Endothelial cell of umbilical vein (primary cell): ENCODE measurements at regions of chr3 and their contacts with region 1.

Region 1: DNA sequence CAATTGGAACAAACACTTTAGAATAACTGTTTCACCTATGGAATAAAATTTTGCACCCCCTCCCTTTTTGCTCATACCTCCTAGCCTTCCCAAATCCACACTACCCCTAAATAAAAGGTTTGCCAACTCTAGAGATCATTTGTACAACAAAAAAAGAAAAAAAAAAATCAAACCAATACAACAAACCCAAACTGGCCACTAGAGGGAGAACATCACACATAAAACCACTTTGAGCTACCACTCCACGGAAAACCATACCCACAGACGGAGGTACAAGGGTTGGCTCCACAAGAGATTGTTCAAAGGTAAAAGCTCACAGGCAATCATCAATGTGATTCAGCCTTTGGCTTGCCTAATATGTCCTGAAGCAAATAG is 47.6 kb downstream of the SETMAR start:
- DNase-seq: no peak
- H3K4me3 ChIP-seq: peak overlapping the region; percentile 26 to 75 (median 49)
- H3K27ac ChIP-seq: peak overlapping the region; percentile 86
- H3K4me1 ChIP-seq: peaks cover 13% of the 10 kb centered on the region
- H3K27me3 ChIP-seq: no peaks in the 10 kb centered on the region
- CTCF ChIP-seq: peak; percentile 48 to 67
- POLR2A ChIP-seq: no peak

Region 2: DNA sequence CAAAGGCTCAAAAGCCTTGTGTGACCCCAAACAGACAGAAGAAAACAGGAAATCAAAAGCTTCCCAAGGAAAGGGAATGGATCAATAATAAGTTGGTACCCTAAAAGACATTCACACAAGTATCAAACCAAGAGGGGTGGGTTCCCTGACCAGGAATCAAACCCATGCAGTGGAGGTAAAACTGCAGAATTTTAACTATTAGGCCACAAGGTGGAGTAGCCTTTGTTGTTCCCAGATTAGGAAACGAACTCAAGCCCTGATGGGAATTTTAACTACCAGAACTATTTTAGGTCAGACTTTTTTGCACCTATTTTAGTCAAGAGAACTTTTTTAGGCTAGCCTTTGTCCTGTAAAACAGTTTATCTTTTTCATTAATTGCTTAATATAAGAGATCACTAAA is 16.2 kb before region 1 on chr3:
- CTCF ChIA-PET with region 1: interaction called, 37 read pairs
- POLR2A ChIA-PET with region 1: no interaction called
- dilution Hi-C with region 1: no loop called
- intact Hi-C with region 1: no loop called
- DNase-seq: no peak
- H3K4me3 ChIP-seq: no peak overlapping the region
- H3K27ac ChIP-seq: no peak overlapping the region
- H3K4me1 ChIP-seq: no peaks in the 10 kb centered on the region
- H3K27me3 ChIP-seq: no peaks in the 10 kb centered on the region
- CTCF ChIP-seq: no peak
- POLR2A ChIP-seq: no peak

Region 3: GRCh38 chr3:4416961-4417360 is 66.2 kb after region 1 on chr3:
- CTCF ChIA-PET with region 1: interaction called, 12 read pairs
- POLR2A ChIA-PET with region 1: no interaction called
- dilution Hi-C with region 1: no loop called
- intact Hi-C with region 1: loop called (anchors 2 kb)
- DNase-seq: peak; percentile 54
- H3K4me3 ChIP-seq: no peak overlapping the region
- H3K27ac ChIP-seq: no peak overlapping the region
- H3K4me1 ChIP-seq: no peaks in the 10 kb centered on the region
- H3K27me3 ChIP-seq: no peaks in the 10 kb centered on the region
- CTCF ChIP-seq: no peak
- POLR2A ChIP-seq: no peak

Region 4: DNA sequence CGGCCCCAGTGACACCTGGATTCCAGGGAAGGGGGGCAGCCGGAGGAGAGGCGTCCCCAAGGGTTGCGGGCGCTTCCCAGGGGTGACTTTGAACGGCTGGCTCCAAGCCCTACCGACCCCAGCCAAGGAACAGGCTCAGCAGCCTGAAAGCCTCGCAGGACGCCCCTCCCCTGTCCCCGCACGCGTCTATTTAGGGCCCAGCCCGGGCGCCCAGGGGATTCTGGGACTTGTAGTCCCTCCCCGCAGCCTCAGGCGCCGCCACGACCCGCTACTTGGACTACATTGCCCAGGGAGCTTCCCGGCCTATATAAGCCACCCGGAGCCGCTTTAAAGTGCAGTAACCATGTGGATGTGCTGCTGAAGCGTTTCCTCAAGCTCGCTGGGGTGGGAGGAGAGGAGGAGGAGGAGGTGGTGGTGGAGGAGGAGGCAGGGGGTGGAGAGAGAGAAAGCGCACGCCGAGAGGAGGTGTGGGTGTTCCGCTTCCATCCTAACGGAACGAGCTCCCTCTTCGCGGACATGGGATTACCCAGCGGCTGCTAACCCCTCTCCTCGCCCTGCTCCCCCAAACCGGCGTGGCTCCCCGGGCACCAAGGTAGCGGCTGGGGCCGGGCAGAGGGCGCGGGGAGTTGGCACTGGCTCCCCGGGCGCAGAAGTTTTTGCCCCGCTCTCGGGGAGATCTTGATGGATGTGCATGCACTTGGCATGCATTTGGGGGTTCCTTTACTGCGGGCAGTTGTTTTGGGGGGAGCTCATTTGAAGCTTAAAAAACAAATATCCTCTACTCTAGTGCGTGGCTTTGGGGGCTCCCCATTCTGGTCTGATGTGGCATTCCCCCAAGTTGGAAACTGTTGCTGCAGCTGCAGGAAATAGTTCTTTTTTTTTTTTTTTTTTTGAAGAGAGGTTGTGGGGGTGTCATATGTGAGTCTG is 142.5 kb after region 1 on chr3 and contains the start of gene ITPR1:
- CTCF ChIA-PET with region 1: interaction called, 111 read pairs
- POLR2A ChIA-PET with region 1: interaction called, 9 read pairs
- dilution Hi-C with region 1: no loop called
- intact Hi-C with region 1: loop called (anchors 1 kb)
- DNase-seq: peak; percentile 99
- H3K4me3 ChIP-seq: peak within 1 kb of the TSS; percentile 75 to 88 (median 85)
- H3K27ac ChIP-seq: peak within 1 kb of the TSS; percentile 80
- H3K4me1 ChIP-seq: peaks cover 24% of the 10 kb centered on the region
- H3K27me3 ChIP-seq: peaks cover 0 to 2% of the 10 kb centered on the region in 2 experiments
- CTCF ChIP-seq: no peak
- POLR2A ChIP-seq: peak; percentile 99
- total RNA-seq, gene ITPR1: 16.1 and 18.0 TPM in 2 replicates

Region 5: DNA sequence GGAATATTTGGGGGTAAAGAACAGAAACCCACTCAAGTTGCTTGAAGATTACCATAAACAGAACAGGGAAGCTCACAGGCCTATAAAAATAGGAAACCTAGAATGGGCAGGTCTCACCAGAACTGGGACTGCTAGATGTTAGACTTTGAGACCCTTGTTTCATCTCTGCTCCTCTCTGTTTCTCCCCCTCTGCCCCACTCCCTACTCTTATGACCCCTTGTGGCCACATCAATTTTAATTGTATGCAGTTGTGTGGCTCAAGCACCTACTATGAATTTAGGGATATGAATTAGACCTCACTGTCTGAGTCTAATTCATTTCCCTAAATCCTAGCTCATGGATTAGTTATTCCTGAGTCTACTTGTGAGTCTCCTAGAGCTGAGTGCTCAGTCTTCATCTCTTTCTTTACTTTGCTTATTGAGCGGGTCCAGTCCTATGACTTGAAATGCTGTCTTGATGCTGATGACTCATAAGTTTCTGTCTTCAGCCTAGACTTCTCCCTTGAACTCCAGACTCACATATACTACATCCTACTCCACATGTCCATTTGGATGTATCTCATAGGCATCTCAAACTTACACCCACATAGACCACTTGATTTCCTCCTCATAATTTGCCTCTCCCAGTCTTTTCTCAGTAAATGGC is 221.0 kb after region 1 on chr3:
- CTCF ChIA-PET with region 1: interaction called, 34 read pairs
- POLR2A ChIA-PET with region 1: no interaction called
- dilution Hi-C with region 1: no loop called
- intact Hi-C with region 1: loop called (anchors 1 kb)
- DNase-seq: peak; percentile 44
- H3K4me3 ChIP-seq: no peak overlapping the region
- H3K27ac ChIP-seq: no peak overlapping the region
- H3K4me1 ChIP-seq: no peaks in the 10 kb centered on the region
- H3K27me3 ChIP-seq: no peaks in the 10 kb centered on the region
- CTCF ChIP-seq: peak; percentile 11 to 21
- POLR2A ChIP-seq: no peak

Region 6: GRCh38 chr3:4642611-4643010 is 291.8 kb after region 1 on chr3:
- CTCF ChIA-PET with region 1: interaction called, 348 read pairs
- POLR2A ChIA-PET with region 1: no interaction called
- dilution Hi-C with region 1: no loop called
- intact Hi-C with region 1: no loop called
- DNase-seq: no peak
- H3K4me3 ChIP-seq: no peak overlapping the region
- H3K27ac ChIP-seq: no peak overlapping the region
- H3K4me1 ChIP-seq: no peaks in the 10 kb centered on the region
- H3K27me3 ChIP-seq: no peaks in the 10 kb centered on the region
- CTCF ChIP-seq: no peak
- POLR2A ChIP-seq: no peak

Region 7: GRCh38 chr3:4834403-4834866 is 483.7 kb after region 1 on chr3:
- CTCF ChIA-PET with region 1: no interaction called
- POLR2A ChIA-PET with region 1: no interaction called
- dilution Hi-C with region 1: no loop called
- intact Hi-C with region 1: no loop called
- DNase-seq: no peak
- H3K4me3 ChIP-seq: no peak overlapping the region
- H3K27ac ChIP-seq: no peak overlapping the region
- H3K4me1 ChIP-seq: peaks cover 18% of the 10 kb centered on the region
- H3K27me3 ChIP-seq: no peaks in the 10 kb centered on the region
- CTCF ChIP-seq: no peak
- POLR2A ChIP-seq: no peak